ENCODE measurements at regions of chr2 and their contacts with region 1.

Region 1: GRCh38 chr2:64644177-64645004 is 9.3 kb downstream of the SERTAD2 start:
- DNase-seq: no peak
- H3K4me3 ChIP-seq: peak overlapping the region in 1 of 2 experiments; percentile 22; a peak in 2 of 4 replicates
- H3K27ac ChIP-seq: peak overlapping the region in 1 of 2 experiments; percentile 38; a peak in 3 of 4 replicates
- H3K4me1 ChIP-seq: peaks cover 20 to 62% of the 10 kb centered on the region in 2 experiments
- H3K27me3 ChIP-seq: no peaks in the 10 kb centered on the region
- CTCF ChIP-seq: no peak
- EP300 ChIP-seq: no peak
- RAD21 ChIP-seq: no peak

Region 2: GRCh38 chr2:64586883-64587481 is 57.4 kb before region 1 on chr2:
- CTCF ChIA-PET with region 1: interaction called, 31 read pairs
- POLR2A ChIA-PET with region 1: no interaction called
- DNase-seq: no peak
- H3K4me3 ChIP-seq: no peak overlapping the region
- H3K27ac ChIP-seq: no peak overlapping the region
- H3K4me1 ChIP-seq: peaks cover 2 to 4% of the 10 kb centered on the region in 2 experiments; a peak in 2 of 4 replicates
- H3K27me3 ChIP-seq: no peaks in the 10 kb centered on the region
- CTCF ChIP-seq: peak; percentile 76
- EP300 ChIP-seq: no peak
- RAD21 ChIP-seq: peak; percentile 86

Region 3: GRCh38 chr2:64601034-64601754 is 43.2 kb before region 1 on chr2:
- CTCF ChIA-PET with region 1: interaction called, 15 read pairs
- POLR2A ChIA-PET with region 1: no interaction called
- DNase-seq: no peak
- H3K4me3 ChIP-seq: no peak overlapping the region
- H3K27ac ChIP-seq: no peak overlapping the region
- H3K4me1 ChIP-seq: peaks cover 0 to 13% of the 10 kb centered on the region in 2 experiments; a peak in 1 of 4 replicates
- H3K27me3 ChIP-seq: no peaks in the 10 kb centered on the region
- CTCF ChIP-seq: no peak
- EP300 ChIP-seq: no peak
- RAD21 ChIP-seq: no peak

Region 4: DNA sequence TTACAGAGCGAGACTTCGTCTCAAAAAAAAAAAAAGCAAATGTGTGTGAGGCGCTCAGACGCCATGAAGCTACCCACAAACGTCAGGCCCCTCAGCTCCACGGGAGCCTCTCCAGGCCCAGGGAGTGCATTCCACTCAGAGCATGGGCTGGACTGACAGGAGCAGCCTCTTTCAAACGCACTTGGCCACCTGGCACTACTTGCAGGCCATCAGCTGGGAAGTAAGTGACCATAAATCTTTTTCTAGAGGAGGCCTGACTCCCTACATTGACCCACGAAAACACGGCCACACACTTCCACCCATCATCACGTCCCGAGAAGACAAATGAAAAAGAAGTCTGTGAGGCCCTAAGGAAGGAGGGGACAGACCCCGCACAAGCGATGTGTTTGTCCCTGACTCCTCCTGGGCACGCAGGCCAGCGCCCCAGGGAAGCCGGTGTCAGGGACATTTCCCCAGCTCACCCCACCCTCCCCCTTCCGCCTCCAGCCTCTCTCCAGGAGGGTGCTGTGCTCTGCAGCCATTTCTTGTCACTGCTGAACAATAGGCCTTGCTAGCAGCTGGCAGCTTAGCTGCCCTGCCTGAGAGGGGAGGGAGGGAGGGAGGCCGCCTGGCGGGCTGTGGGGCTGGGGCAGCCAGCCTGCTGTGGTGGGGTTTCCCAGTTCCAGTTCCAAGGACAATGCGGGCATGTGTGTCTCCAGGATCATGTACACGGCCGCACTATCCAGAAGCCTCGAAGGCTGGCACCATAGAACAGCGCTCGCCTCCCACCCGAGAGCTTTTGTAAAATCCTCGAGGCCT is 17.2 kb before region 1 on chr2:
- CTCF ChIA-PET with region 1: interaction called, 20 read pairs
- POLR2A ChIA-PET with region 1: no interaction called
- DNase-seq: peak; percentile 61
- H3K4me3 ChIP-seq: no peak overlapping the region
- H3K27ac ChIP-seq: no peak overlapping the region
- H3K4me1 ChIP-seq: peaks cover 0 to 45% of the 10 kb centered on the region in 2 experiments; a peak in 2 of 4 replicates
- H3K27me3 ChIP-seq: no peaks in the 10 kb centered on the region
- CTCF ChIP-seq: no peak
- EP300 ChIP-seq: no peak
- RAD21 ChIP-seq: no peak

Region 5: DNA sequence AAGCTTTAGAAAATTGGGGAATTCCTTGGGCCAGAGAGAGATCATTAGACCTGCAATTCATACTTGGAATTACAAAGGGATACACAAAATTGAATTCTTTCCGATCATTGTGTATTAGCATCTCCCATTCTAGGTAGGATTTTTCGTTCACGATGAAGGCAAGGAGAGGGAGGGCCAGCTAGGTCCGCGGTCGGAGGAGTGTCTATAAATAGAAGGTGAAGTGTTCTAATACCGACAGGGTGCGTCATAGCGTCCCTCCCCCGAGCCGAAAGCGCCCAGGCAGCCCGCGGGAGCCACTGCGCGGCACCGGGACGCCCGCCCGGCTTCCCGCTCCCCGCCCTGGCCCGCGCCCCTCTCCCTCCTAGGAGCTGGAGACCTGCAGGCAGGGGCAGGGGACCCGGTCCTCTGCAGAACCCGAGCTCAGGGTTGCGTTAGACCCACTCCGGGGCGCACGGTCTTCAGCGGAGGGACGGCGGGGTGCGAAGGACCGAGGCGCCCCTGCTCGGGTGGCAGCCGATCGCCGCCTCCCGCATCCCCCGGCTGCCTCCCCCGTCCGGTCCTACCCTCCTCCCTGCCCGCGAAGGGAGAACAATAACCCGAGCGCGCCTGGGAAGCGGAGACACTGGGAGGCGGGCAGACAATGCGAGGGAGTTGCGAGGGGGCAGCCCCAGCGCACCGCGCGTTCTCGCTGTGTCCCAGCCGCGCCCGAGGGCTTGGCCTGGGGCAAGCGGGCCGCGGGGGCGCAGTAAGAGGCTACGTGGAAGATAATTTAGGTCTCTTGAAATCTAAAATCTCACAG is 123.5 kb after region 1 on chr2:
- CTCF ChIA-PET with region 1: interaction called, 10 read pairs
- POLR2A ChIA-PET with region 1: no interaction called
- DNase-seq: peak; percentile 95
- H3K4me3 ChIP-seq: peak overlapping the region; percentile 63 to 73
- H3K27ac ChIP-seq: peak overlapping the region; percentile 94 to 98
- H3K4me1 ChIP-seq: peaks cover 4 to 22% of the 10 kb centered on the region in 2 experiments
- H3K27me3 ChIP-seq: no peaks in the 10 kb centered on the region
- CTCF ChIP-seq: no peak; the same call in 1 of the 2 replicates
- EP300 ChIP-seq: peak in 1 of 2 experiments; percentile 64; a peak in 1 of 4 replicates
- RAD21 ChIP-seq: no peak

Region 6: GRCh38 chr2:64859312-64860212 is 215.2 kb after region 1 on chr2:
- CTCF ChIA-PET with region 1: interaction called, 16 read pairs
- POLR2A ChIA-PET with region 1: interaction called, 5 read pairs
- DNase-seq: peak; percentile 35
- H3K4me3 ChIP-seq: no peak overlapping the region
- H3K27ac ChIP-seq: no peak overlapping the region
- H3K4me1 ChIP-seq: peaks cover 9 to 15% of the 10 kb centered on the region in 2 experiments; a peak in 1 of 4 replicates
- H3K27me3 ChIP-seq: no peaks in the 10 kb centered on the region
- CTCF ChIP-seq: no peak
- EP300 ChIP-seq: no peak
- RAD21 ChIP-seq: no peak

Region 7: GRCh38 chr2:64873472-64873924 is 229.1 kb after region 1 on chr2:
- CTCF ChIA-PET with region 1: interaction called, 23 read pairs
- POLR2A ChIA-PET with region 1: no interaction called
- DNase-seq: peak; percentile 87
- H3K4me3 ChIP-seq: peak overlapping the region in 1 of 2 experiments; percentile 40; a peak in 1 of 4 replicates
- H3K27ac ChIP-seq: no peak overlapping the region
- H3K4me1 ChIP-seq: peaks cover 2 to 6% of the 10 kb centered on the region in 2 experiments; a peak in 2 of 4 replicates
- H3K27me3 ChIP-seq: no peaks in the 10 kb centered on the region
- CTCF ChIP-seq: peak; percentile 95
- EP300 ChIP-seq: no peak
- RAD21 ChIP-seq: peak; percentile 85

Measured in SK-N-SH (cell line).